H1 (cell line): ENCODE measurements at regions of chr17 and their contacts with region 1.

Region 1: DNA sequence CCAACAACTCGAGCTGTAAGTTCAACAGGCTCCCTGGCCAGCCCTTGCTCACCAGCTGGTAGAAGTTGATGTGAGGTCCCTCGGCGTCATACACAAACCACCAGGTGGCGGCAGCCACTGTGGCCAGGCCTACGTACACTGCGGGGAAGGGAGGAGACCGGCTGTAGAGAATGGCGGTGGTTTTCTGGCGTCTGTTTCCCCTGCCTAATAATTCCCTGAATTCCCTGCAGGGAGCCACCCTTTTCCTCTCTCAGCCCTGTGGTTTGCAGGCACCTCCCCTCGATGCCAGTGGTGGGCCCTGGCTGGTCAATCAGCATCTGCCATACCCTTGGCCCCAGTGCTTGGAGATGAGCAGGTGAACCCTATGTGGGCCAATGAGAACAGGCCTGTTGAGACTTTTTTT is 18.9 kb upstream of the P2RX1 start:
- DNase-seq: peak; percentile 44 to 80
- H3K4me3 ChIP-seq: no peak overlapping the region
- H3K27ac ChIP-seq: no peak overlapping the region
- H3K4me1 ChIP-seq: no peaks in the 10 kb centered on the region
- H3K27me3 ChIP-seq: no peaks in the 10 kb centered on the region
- CTCF ChIP-seq: peak; percentile 92 to 94 (median 92)
- EP300 ChIP-seq: peak in 1 of 2 experiments; percentile 62; a peak in 1 of 3 replicates
- POLR2A ChIP-seq: no peak
- RAD21 ChIP-seq: peak; percentile 92 to 94

Region 2: DNA sequence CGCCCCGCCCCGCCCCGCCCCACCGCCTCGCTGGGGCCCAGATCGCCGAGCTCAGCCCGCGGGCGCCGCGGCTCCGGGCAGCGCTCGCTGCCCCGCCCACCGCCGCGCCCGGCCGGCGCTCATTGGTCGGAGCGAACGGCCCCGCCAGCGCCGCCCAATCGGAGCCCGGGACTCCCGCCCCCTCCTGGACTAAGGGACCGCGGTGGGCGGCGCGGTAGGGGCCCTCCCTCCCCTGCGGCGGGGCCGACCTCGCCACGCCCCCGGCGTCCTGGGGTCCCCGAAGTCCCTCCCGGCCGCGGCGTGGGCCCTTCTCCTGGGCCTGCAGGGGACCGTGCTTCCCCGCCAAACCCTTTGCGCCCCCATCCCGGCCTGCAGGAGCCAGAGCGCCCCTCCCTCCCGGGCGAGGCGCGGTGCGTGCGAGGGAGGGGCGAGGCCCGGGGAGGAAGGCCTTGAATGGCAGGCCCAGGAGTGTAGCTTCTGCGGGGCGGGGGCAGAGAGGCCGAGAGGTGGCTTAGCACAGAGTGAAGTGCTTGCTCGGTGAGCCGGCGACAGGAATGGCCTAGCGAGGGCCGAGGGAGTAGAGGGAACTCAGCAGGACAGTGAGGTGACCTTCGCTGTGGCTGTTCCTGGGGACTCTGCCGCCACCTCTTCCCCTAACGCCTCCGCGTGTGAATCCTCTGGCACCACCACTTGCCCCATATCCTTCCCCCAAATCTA is 42.0 kb before region 1 on chr17 and contains the start of gene CAMKK1:
- CTCF ChIA-PET with region 1: no interaction called
- POLR2A ChIA-PET with region 1: no interaction called
- DNase-seq: peak; percentile 44 to 92
- H3K4me3 ChIP-seq: peak within 1 kb of the TSS; percentile 52 to 82 (median 63)
- H3K27ac ChIP-seq: no peak within 1 kb of the TSS; the same call in 1 of the 2 replicates
- H3K4me1 ChIP-seq: peaks cover 6 to 31% (median 21%) of the 10 kb centered on the region in 4 experiments
- H3K27me3 ChIP-seq: peaks cover 0 to 6% (median 1%) of the 10 kb centered on the region in 4 experiments; a peak in 3 of 7 replicates
- CTCF ChIP-seq: no peak
- EP300 ChIP-seq: no peak
- POLR2A ChIP-seq: peak in 1 of 2 experiments; percentile 67; a peak in 2 of 3 replicates
- RAD21 ChIP-seq: no peak
- total RNA-seq, gene CAMKK1: 7.6 and 8.5 TPM in 2 replicates

Region 3: GRCh38 chr17:3924512-3925268 is 10.5 kb before region 1 on chr17:
- CTCF ChIA-PET with region 1: interaction called, 10 read pairs
- POLR2A ChIA-PET with region 1: interaction called, 3 read pairs
- DNase-seq: no peak
- H3K4me3 ChIP-seq: no peak overlapping the region
- H3K27ac ChIP-seq: no peak overlapping the region
- H3K4me1 ChIP-seq: peaks cover 0 to 3% (median 0%) of the 10 kb centered on the region in 4 experiments; a peak in 3 of 7 replicates
- H3K27me3 ChIP-seq: no peaks in the 10 kb centered on the region
- CTCF ChIP-seq: no peak
- EP300 ChIP-seq: no peak
- POLR2A ChIP-seq: no peak
- RAD21 ChIP-seq: no peak

Region 4: GRCh38 chr17:3956327-3956957 is 21.3 kb after region 1 on chr17:
- CTCF ChIA-PET with region 1: no interaction called
- POLR2A ChIA-PET with region 1: no interaction called
- DNase-seq: no peak
- H3K4me3 ChIP-seq: peak overlapping the region in 1 of 4 experiments; percentile 5; a peak in 1 of 8 replicates
- H3K27ac ChIP-seq: no peak overlapping the region
- H3K4me1 ChIP-seq: peaks cover 0 to 45% (median 22%) of the 10 kb centered on the region in 4 experiments; a peak in 6 of 7 replicates
- H3K27me3 ChIP-seq: no peaks in the 10 kb centered on the region
- CTCF ChIP-seq: no peak
- EP300 ChIP-seq: no peak
- POLR2A ChIP-seq: no peak
- RAD21 ChIP-seq: no peak

Region 5: DNA sequence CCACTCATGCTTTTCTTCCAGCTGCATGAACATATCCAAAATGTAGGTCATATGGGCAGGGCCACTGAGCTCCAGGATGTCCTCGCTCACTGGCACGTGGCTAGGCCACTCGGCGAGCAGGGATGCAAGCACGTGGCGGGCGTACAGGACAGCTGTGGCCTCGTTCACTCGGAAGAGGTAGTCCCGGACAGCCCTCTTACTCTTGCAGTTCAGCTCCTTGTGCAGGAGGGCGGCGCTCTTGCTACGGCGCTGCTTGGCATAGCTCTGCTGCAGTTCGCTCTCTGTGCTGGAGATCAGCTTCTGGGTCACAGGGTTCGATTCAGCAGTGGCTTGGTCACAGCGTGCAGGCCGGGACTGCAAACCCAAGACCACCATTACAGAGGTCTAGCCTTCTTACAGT is 82.2 kb after region 1 on chr17:
- CTCF ChIA-PET with region 1: interaction called, 13 read pairs
- POLR2A ChIA-PET with region 1: no interaction called
- DNase-seq: peak in 1 of 2 experiments; percentile 61
- H3K4me3 ChIP-seq: no peak overlapping the region
- H3K27ac ChIP-seq: no peak overlapping the region
- H3K4me1 ChIP-seq: no peaks in the 10 kb centered on the region
- H3K27me3 ChIP-seq: no peaks in the 10 kb centered on the region
- CTCF ChIP-seq: peak; percentile 39 to 69 (median 69); a peak in 3 of 4 replicates
- EP300 ChIP-seq: no peak
- POLR2A ChIP-seq: no peak
- RAD21 ChIP-seq: peak; percentile 31; a peak in 3 of 4 replicates

Region 6: GRCh38 chr17:4049546-4049945 is 114.4 kb after region 1 on chr17:
- CTCF ChIA-PET with region 1: no interaction called
- POLR2A ChIA-PET with region 1: no interaction called
- DNase-seq: no peak
- H3K4me3 ChIP-seq: no peak overlapping the region
- H3K27ac ChIP-seq: no peak overlapping the region
- H3K4me1 ChIP-seq: no peaks in the 10 kb centered on the region
- H3K27me3 ChIP-seq: no peaks in the 10 kb centered on the region
- CTCF ChIP-seq: no peak
- EP300 ChIP-seq: no peak
- POLR2A ChIP-seq: no peak
- RAD21 ChIP-seq: no peak